CD8-positive, alpha-beta T cell (primary cell): ENCODE measurements at regions of chr11 and their contacts with region 1.

Region 1: DNA sequence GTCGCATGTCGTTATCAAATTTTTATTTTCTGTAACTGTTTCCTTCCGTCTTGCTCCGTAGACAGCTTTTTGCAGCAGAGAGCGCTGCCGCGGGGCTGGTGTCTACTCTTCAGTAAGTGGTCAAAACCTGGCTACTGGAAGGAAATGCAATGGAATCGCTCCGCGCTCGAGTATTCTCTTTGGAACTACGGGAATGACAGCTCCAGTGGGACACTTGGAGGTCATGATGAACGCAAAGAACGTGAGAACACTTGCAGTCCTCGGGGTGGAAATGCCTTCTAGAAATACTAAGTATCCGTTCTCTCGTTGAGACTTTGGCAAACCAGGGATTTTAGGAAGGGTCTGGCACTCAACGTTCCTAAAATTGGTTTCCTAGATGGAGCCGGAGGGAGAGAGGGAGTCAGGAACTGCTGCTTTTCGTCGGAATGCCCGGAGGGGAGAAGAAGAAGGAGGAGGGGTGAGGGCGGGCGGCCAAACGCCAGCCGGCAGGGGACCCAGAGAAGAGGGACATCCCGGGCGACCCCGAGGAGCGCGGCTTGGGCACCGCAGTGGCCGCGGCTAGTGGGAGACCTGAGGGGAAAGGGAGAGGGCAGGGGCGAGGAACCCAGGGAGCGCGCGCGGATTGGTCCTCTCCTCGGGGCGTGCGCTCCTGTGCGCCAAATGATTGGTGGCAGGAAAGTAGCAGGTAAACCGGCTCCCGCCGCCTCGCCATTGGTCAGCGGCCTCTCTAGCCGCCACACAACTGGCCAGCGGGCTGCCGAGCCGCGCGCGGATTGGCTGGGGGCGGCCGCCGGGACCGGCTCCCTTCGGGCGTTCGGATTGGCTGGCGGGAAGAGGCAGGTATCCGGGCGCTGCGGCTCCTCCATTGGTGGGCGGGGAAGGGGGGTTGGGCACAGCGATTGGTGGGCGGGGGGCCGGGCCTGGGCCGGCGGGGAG is 490 bp upstream of the BMAL1 start:
- DNase-seq: peak; percentile 95 to 98 (median 96)
- ATAC-seq: peak; percentile 80
- H3K4me3 ChIP-seq: peak overlapping the region; percentile 96 to 98
- H3K4me3 Mint-ChIP-seq: peak overlapping the region; percentile 96
- H3K27ac ChIP-seq: peak overlapping the region; percentile 56 to 82
- H3K27ac Mint-ChIP-seq: peak overlapping the region; percentile 92
- H3K4me1 ChIP-seq: peaks cover 34% of the 10 kb centered on the region
- H3K4me1 Mint-ChIP-seq: peaks cover 41% of the 10 kb centered on the region
- H3K27me3 ChIP-seq: no peaks in the 10 kb centered on the region
- H3K27me3 Mint-ChIP-seq: no peaks in the 10 kb centered on the region
- CTCF ChIP-seq: no peak

Region 2: GRCh38 chr11:13324709-13325108 is 47.6 kb after region 1 on chr11:
- CTCF ChIA-PET with region 1: no interaction called
- POLR2A ChIA-PET with region 1: no interaction called
- intact Hi-C with region 1: loop called in 1 of 2 experiments (anchors 5 kb)
- DNase-seq: no peak
- ATAC-seq: no peak
- H3K4me3 ChIP-seq: no peak overlapping the region
- H3K4me3 Mint-ChIP-seq: no peak overlapping the region
- H3K27ac ChIP-seq: no peak overlapping the region
- H3K27ac Mint-ChIP-seq: no peak overlapping the region
- H3K4me1 ChIP-seq: no peaks in the 10 kb centered on the region
- H3K4me1 Mint-ChIP-seq: peaks cover 62% of the 10 kb centered on the region
- H3K27me3 ChIP-seq: no peaks in the 10 kb centered on the region
- H3K27me3 Mint-ChIP-seq: no peaks in the 10 kb centered on the region
- CTCF ChIP-seq: no peak

Region 3: GRCh38 chr11:13434247-13435205 is 157.4 kb after region 1 on chr11:
- CTCF ChIA-PET with region 1: no interaction called
- POLR2A ChIA-PET with region 1: no interaction called
- intact Hi-C with region 1: no loop called
- DNase-seq: no peak
- ATAC-seq: no peak
- H3K4me3 ChIP-seq: no peak overlapping the region
- H3K4me3 Mint-ChIP-seq: no peak overlapping the region
- H3K27ac ChIP-seq: no peak overlapping the region
- H3K27ac Mint-ChIP-seq: peak overlapping the region; percentile 4
- H3K4me1 ChIP-seq: no peaks in the 10 kb centered on the region
- H3K4me1 Mint-ChIP-seq: peaks cover 38% of the 10 kb centered on the region
- H3K27me3 ChIP-seq: no peaks in the 10 kb centered on the region
- H3K27me3 Mint-ChIP-seq: no peaks in the 10 kb centered on the region
- CTCF ChIP-seq: no peak

Region 4: DNA sequence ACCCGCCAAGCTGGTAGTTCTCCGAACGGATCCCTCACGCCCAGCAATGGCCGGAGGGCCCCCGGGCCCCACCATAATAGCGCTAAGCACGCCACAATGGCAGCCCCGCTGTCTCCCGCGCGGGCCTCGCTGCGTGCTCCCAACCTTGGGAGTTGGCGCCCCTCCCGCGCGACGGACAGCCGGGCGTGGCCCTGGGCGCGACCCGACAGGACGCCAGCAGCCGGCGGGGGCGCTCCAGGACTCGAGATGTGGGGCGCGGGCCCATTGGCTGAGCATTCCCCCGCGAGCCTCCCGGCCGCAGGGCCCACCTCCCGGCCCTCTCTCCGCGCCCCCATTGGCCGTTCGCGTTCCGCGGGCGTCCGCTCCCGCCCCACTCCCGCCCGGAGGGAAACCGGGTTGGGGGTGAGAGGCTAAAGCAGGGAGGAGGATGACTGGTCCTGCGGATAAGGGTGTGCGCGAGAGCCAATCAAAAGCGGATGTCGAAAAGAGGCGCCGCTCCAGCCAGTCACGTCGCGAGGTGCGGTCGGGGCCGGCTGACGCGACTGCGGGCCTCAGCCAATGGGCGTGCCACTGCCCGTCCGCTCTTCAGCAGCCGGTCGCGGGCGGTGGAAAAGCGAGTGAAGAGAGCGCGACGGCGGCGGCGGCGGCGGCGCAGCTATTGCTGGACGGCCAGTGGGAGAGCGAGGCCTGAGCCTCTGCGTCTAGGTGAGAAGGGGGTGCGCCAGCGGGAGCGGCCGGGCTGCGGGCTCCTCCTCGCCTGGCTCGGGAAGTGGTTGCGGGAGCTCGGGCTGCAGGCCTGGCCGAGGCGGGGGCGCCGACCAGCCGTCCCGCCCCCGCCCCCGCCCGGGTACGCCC is 391.2 kb after region 1 on chr11 and contains the start of gene FAR1:
- CTCF ChIA-PET with region 1: no interaction called
- POLR2A ChIA-PET with region 1: no interaction called
- intact Hi-C with region 1: loop called (anchors 1 to 5 kb)
- DNase-seq: peak; percentile 92 to 98 (median 95)
- ATAC-seq: peak; percentile 89
- H3K4me3 ChIP-seq: peak within 1 kb of the TSS; percentile 76 to 81
- H3K4me3 Mint-ChIP-seq: peak within 1 kb of the TSS; percentile 98
- H3K27ac ChIP-seq: peak within 1 kb of the TSS; percentile 66 to 69
- H3K27ac Mint-ChIP-seq: peak within 1 kb of the TSS; percentile 96
- H3K4me1 ChIP-seq: peaks cover 14% of the 10 kb centered on the region
- H3K4me1 Mint-ChIP-seq: peaks cover 45% of the 10 kb centered on the region
- H3K27me3 ChIP-seq: no peaks in the 10 kb centered on the region
- H3K27me3 Mint-ChIP-seq: peaks cover 5% of the 10 kb centered on the region
- CTCF ChIP-seq: peak; percentile 70
- total RNA-seq, gene FAR1: 29.8 to 34.0 TPM